Right ventricle myocardium superior (tissue), 1 donor: ENCODE measurements at regions of chr7 and their contacts with region 1.

Region 1: DNA sequence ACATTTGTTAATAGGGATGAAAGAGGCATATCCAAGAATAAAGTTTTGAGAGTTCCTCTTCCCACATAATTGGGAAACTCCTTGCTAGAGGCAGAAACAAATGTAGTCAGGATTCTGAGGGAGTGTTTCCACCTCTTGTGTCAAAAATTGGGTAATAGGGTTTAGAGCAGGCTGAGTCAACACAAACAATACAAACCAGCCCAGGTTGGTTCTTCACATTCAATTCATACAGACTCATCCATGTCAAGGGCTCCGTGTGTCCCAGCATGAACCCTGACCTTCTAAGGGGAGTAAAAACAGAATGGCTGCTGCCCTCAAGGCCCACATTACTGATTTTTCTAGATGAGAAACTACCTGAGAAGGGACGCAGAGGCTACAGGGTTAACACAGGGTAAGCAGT is 75.3 kb downstream of the GLI3 start:
- DNase-seq: no peak
- ATAC-seq: no peak

Region 2: DNA sequence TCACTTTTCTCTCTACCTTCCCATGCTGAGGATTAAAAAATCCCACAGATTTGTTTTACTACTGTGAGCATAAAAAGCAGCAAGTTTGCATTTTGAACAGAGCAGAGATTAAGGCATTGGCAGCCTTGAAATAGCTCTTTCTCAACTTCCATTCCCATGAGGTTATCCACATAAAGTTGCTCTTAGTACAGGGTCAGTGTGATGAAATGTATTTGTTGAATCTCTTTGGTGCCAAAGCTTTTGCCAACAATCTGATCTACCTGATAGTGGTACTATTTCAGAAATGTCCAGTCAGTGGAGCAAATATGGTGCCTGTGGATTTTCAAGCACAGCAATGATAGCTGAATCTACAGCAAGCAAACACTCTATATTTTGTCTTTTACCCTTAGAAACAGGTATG is 713.6 kb before region 1 on chr7:
- intact Hi-C with region 1: no loop called
- DNase-seq: no peak
- ATAC-seq: peak; percentile 87

Region 3: GRCh38 chr7:42128703-42129102 is 33.0 kb before region 1 on chr7:
- intact Hi-C with region 1: loop called (anchors 2 kb)
- DNase-seq: no peak
- ATAC-seq: no peak